ENCODE measurements at regions of chr17 and their contacts with region 1.

Region 1: DNA sequence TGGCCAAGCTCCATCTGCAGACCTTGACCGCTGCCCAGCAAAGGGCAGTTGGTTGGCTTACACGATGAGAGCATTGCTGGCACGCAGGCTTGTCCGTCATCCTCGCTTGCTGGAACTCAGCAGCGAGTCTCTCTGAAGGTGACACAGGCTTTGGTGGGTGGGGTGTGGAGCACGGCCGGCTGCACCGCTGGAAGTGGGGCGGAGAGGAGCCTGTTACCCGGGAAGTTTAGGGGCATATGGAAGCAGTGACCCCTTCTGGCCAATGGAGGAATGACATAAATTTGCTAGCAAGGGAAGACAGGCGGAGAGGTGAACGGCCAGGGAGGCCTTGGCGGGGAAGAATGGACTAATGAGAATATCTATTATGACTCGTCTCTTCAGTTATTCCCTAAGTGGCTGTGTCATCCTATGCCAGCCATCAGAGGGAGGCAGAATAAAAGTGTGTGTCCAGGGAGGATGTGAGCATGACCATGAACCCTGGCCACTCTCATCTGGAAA is 65.9 kb upstream of the SDK2 start:
- DNase-seq: peak; percentile 60
- H3K4me3 ChIP-seq: peak overlapping the region; percentile 59
- H3K27ac ChIP-seq: peak overlapping the region; percentile 76
- H3K4me1 ChIP-seq: peaks cover 29% of the 10 kb centered on the region
- CTCF ChIP-seq: peak; percentile 95

Region 2: GRCh38 chr17:73013816-73014663 is 696.1 kb before region 1 on chr17:
- CTCF ChIA-PET with region 1: no interaction called
- POLR2A ChIA-PET with region 1: no interaction called
- intact Hi-C with region 1: no loop called
- DNase-seq: peak; percentile 11
- H3K4me3 ChIP-seq: no peak overlapping the region
- H3K27ac ChIP-seq: no peak overlapping the region
- H3K4me1 ChIP-seq: peaks cover 10% of the 10 kb centered on the region
- CTCF ChIP-seq: peak; percentile 40

Region 3: DNA sequence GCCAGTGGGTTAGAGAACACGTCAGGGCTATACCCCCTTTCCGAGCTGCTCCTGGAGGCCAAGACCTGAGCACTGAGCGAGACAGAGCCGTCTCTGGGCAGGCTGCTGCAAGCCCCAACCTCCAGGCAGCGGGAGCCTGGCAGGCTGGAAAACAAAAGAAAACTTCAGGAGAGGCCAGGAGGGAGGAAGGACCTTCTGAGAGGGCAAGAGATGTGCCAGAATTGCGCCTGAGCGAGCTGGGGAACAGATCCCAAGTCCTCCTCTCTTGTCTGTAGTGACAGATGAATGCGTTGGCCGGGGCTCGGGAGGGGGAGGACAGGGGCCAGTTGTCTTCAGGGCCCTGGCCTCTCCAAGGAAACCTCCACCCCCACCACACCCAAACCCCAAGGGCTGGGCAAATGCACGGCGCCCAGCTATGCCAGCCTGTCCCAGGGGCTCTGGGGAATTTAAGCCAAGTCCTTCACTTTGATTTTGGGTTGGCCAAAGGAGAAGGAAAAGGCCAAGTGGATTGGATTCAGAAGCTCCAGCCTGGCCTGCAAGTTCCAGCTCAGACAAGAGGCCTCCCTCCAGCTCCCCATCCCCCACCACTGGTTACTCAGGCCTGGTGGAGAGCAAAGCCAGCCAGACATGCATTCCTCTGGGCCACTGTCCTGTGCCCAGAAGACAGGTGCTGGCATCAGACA is 84.0 kb before region 1 on chr17:
- CTCF ChIA-PET with region 1: no interaction called
- POLR2A ChIA-PET with region 1: no interaction called
- intact Hi-C with region 1: no loop called
- DNase-seq: no peak
- H3K4me3 ChIP-seq: no peak overlapping the region
- H3K27ac ChIP-seq: no peak overlapping the region
- H3K4me1 ChIP-seq: no peaks in the 10 kb centered on the region
- CTCF ChIP-seq: no peak

Region 4: DNA sequence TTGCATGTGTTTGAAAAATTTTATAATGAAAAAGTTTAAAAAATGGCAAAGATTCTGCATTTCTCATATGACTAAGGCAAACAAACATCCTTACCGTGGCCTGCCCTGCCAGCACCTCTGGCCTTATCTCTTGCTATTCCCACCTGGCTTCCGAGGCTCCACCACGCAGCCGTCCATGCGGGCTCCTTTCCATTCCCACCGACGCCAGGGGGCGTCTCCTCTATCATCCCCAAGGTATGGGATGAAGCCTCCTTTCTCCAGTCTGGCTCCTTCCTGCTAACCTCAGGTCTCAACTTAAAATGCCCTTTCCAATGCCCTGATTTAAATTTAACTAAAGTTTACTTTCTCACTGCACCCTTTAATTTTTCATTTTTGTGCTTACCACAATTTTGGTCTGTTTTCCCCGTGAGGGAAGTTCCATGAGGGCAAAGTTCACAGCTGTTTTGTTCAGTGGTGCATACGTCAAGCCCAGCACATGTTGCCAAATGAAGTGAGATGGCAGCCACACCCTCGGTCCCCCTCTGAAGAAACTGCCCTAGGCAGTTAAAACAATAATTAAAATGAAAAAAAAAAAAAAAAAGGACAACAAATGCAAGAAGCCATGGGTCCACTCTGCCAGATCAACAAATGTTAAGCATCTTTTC is 52.5 kb before region 1 on chr17:
- CTCF ChIA-PET with region 1: no interaction called
- POLR2A ChIA-PET with region 1: interaction called, 3 read pairs
- intact Hi-C with region 1: loop called (anchors 2 kb)
- DNase-seq: peak; percentile 54
- H3K4me3 ChIP-seq: no peak overlapping the region
- H3K27ac ChIP-seq: no peak overlapping the region
- H3K4me1 ChIP-seq: no peaks in the 10 kb centered on the region
- CTCF ChIP-seq: peak; percentile 85